Right ventricle myocardium superior (tissue), 1 donor: ENCODE measurements at regions of chr12 and their contacts with region 1.

Region 1: GRCh38 chr12:52082988-52083637 is 3.6 kb downstream of the SMIM41 start:
- DNase-seq: peak; percentile 76
- ATAC-seq: peak; percentile 70

Region 2: GRCh38 chr12:52004042-52004648 is 79.0 kb before region 1 on chr12:
- intact Hi-C with region 1: loop called (anchors 5 kb)
- DNase-seq: peak; percentile 61
- ATAC-seq: peak; percentile 29

Region 3: GRCh38 chr12:52019113-52019770 is 63.9 kb before region 1 on chr12:
- intact Hi-C with region 1: no loop called
- DNase-seq: no peak
- ATAC-seq: no peak

Region 4: GRCh38 chr12:52029686-52030085 is 53.4 kb before region 1 on chr12:
- intact Hi-C with region 1: loop called (anchors 5 kb)
- DNase-seq: no peak
- ATAC-seq: peak; percentile 25